WTC11 (cell line): ENCODE measurements at regions of chr2 and their contacts with region 1.

Region 1: GRCh38 chr2:27191053-27191829 is 20.6 kb upstream of the ATRAID start:
- DNase-seq: peak; percentile 54
- ATAC-seq: peak; percentile 88
- H3K4me3 Mint-ChIP-seq: no peak overlapping the region
- H3K27ac Mint-ChIP-seq: no peak overlapping the region
- H3K4me1 Mint-ChIP-seq: no peaks in the 10 kb centered on the region
- H3K27me3 Mint-ChIP-seq: no peaks in the 10 kb centered on the region; the same call in 1 of the 2 replicates
- CTCF ChIP-seq: 0 out of 2 replicates have a peak, but pooled peaks have one; percentile 19

Region 2: DNA sequence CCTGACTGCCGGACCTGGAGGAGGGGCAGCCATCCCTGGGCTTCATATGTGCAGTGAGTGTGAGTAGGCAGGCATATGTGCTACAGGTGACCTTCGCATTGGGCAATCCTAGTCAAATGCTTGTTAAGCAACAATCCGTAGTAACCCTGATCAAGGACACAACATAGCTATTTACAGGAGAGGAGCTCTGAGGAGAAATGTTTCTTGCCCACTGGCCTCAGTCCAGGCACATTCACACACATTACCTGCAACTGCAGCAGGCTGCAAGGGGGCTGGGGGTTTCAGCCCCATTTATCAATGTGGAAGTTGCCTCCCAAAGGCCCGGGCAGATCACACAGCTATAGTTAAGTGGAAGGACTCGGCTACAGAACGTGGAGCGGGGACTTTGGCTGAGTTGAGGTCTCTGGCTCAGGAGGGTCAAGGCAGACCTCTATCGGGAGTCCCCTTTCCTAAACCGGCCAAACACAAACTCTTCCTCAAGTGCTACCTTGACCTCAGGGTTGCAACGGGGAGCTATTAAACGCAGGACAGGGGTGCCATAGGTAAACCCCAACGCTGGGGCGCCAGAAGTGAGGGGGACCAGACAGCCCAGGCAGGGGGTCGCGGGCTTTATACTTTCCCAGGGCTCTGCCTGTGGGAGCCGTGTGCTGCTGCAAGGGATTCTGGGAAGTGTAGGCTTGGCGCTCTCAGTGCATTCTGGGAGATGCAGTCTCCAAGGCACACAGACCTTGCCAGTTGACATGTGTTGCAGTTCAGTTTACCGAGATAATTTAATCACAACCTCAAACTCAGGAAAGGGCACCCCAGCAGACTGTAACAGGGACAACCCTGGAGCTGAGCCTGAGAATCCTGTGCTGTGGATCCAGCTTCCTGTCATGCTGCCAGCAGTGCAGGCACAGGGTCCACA is 95.2 kb before region 1 on chr2:
- CTCF ChIA-PET with region 1: interaction called, 39 read pairs
- POLR2A ChIA-PET with region 1: no interaction called
- DNase-seq: peak; percentile 59
- ATAC-seq: peak; percentile 87
- H3K4me3 Mint-ChIP-seq: peak overlapping the region; percentile 58
- H3K27ac Mint-ChIP-seq: peak overlapping the region; percentile 68; the same call in 1 of the 2 replicates
- H3K4me1 Mint-ChIP-seq: peaks cover 6% of the 10 kb centered on the region
- H3K27me3 Mint-ChIP-seq: no peaks in the 10 kb centered on the region
- CTCF ChIP-seq: no peak

Region 3: GRCh38 chr2:27123302-27124231 is 67.7 kb before region 1 on chr2 and contains the start of gene ABHD1:
- CTCF ChIA-PET with region 1: interaction called, 11 read pairs
- POLR2A ChIA-PET with region 1: no interaction called
- DNase-seq: peak; percentile 71
- ATAC-seq: peak; percentile 84
- H3K4me3 Mint-ChIP-seq: peak within 1 kb of the TSS; percentile 84
- H3K27ac Mint-ChIP-seq: no peak within 1 kb of the TSS
- H3K4me1 Mint-ChIP-seq: peaks cover 16% of the 10 kb centered on the region; the same call in 1 of the 2 replicates
- H3K27me3 Mint-ChIP-seq: peaks cover 61% of the 10 kb centered on the region
- CTCF ChIP-seq: no peak
- total RNA-seq, gene ABHD1: 0.31 to 0.62 TPM (median 0.53 TPM) in 3 replicates

Region 4: GRCh38 chr2:27152786-27153510 is 38.3 kb before region 1 on chr2:
- CTCF ChIA-PET with region 1: interaction called, 21 read pairs
- POLR2A ChIA-PET with region 1: no interaction called
- DNase-seq: no peak
- ATAC-seq: no peak
- H3K4me3 Mint-ChIP-seq: no peak overlapping the region
- H3K27ac Mint-ChIP-seq: no peak overlapping the region
- H3K4me1 Mint-ChIP-seq: no peaks in the 10 kb centered on the region
- H3K27me3 Mint-ChIP-seq: no peaks in the 10 kb centered on the region
- CTCF ChIP-seq: no peak

Region 5: DNA sequence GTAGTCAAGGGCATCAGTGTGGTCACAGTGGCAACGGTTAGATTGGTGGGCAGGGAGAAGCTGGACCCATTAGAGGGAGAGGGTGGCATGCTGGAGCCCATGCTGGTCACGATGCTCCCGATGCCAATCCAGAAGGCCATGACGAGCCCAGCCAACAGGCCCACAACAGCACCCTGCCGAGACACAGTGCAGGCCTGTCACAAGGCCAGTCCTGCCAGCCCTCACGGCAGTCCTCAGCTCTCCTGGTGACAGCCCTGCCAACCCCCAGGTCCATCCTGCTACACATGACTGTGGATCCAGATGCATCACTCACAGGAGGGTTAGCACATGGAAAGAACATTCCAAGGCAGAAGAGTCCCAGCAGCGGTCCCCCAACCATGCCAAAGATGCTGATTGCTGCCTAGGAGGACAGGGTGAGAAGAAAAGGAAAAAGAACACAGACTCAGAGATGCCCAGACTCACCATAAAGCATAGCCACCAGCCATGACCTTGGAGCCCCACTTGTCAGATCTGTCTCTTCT is 10.5 kb after region 1 on chr2:
- CTCF ChIA-PET with region 1: no interaction called
- POLR2A ChIA-PET with region 1: no interaction called
- DNase-seq: no peak
- ATAC-seq: no peak
- H3K4me3 Mint-ChIP-seq: no peak overlapping the region
- H3K27ac Mint-ChIP-seq: no peak overlapping the region; the same call in 1 of the 2 replicates
- H3K4me1 Mint-ChIP-seq: no peaks in the 10 kb centered on the region
- H3K27me3 Mint-ChIP-seq: no peaks in the 10 kb centered on the region
- CTCF ChIP-seq: no peak

Region 6: GRCh38 chr2:27241761-27242613 is 50.7 kb after region 1 on chr2:
- CTCF ChIA-PET with region 1: no interaction called
- POLR2A ChIA-PET with region 1: no interaction called
- DNase-seq: no peak
- ATAC-seq: no peak
- H3K4me3 Mint-ChIP-seq: no peak overlapping the region
- H3K27ac Mint-ChIP-seq: no peak overlapping the region
- H3K4me1 Mint-ChIP-seq: no peaks in the 10 kb centered on the region
- H3K27me3 Mint-ChIP-seq: no peaks in the 10 kb centered on the region
- CTCF ChIP-seq: no peak

Region 7: DNA sequence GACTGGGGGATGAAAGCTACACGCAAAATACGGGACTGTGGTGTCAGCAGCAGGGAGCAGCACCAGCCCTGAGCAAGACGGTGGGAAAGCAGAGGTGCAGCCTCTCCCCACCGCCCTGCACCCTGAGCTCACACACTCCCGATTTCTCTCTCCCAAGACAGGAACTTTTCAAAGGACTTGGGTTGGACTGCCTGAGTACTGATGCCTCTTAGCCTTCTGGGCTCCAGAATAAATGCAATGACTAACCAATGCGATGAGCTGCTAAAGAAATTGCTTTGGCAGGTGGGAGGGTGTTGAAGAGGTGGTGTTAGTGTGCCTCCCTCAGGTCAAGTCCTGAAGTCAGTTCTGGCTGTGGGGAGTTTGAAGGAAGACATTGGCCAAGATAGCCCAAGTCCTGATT is 100.6 kb after region 1 on chr2:
- CTCF ChIA-PET with region 1: interaction called, 11 read pairs
- POLR2A ChIA-PET with region 1: no interaction called
- DNase-seq: peak; percentile 35
- ATAC-seq: peak; percentile 95
- H3K4me3 Mint-ChIP-seq: peak overlapping the region; percentile 29
- H3K27ac Mint-ChIP-seq: no peak overlapping the region
- H3K4me1 Mint-ChIP-seq: peaks cover 18% of the 10 kb centered on the region
- H3K27me3 Mint-ChIP-seq: no peaks in the 10 kb centered on the region
- CTCF ChIP-seq: no peak